AG04449 (cell line): ENCODE measurements at regions of chr19 and their contacts with region 1.

Region 1: GRCh38 chr19:33186431-33187182 is 7.5 kb upstream of the LRP3 start:
- DNase-seq: no peak
- H3K4me3 ChIP-seq: no peak overlapping the region
- CTCF ChIP-seq: no peak

Region 2: GRCh38 chr19:33071887-33072286 is 114.7 kb before region 1 on chr19:
- CTCF ChIA-PET with region 1: no interaction called
- POLR2A ChIA-PET with region 1: no interaction called
- DNase-seq: no peak
- H3K4me3 ChIP-seq: no peak overlapping the region
- CTCF ChIP-seq: no peak

Region 3: GRCh38 chr19:33114302-33114701 is 72.3 kb before region 1 on chr19:
- CTCF ChIA-PET with region 1: interaction called, 19 read pairs
- POLR2A ChIA-PET with region 1: no interaction called
- DNase-seq: no peak
- H3K4me3 ChIP-seq: no peak overlapping the region
- CTCF ChIP-seq: no peak

Region 4: GRCh38 chr19:33132425-33132824 is 54.2 kb before region 1 on chr19:
- CTCF ChIA-PET with region 1: interaction called, 99 read pairs
- POLR2A ChIA-PET with region 1: no interaction called
- DNase-seq: no peak
- H3K4me3 ChIP-seq: no peak overlapping the region
- CTCF ChIP-seq: peak; percentile 22

Region 5: DNA sequence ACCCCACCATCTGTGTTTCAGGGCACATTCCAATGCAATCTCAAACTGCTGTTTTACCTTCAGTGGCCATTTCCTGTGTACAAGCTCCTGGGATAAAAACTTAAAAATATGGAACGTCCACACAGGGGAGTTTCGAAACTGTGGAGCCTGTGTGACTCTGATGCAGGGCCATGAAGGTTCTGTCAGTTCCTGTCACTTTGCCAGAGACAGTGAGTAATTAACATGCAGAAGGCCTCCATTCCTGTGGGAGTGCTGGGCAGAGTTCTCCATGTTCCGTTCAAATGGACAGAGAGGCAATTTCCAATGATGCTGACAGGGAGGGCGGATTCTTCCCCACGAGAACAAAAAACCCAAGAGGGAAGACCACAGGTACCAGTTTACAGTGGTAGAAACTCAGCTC is 30.3 kb before region 1 on chr19:
- CTCF ChIA-PET with region 1: interaction called, 26 read pairs
- POLR2A ChIA-PET with region 1: no interaction called
- DNase-seq: no peak
- H3K4me3 ChIP-seq: no peak overlapping the region
- CTCF ChIP-seq: no peak